ENCODE measurements at regions of chr1 and their contacts with region 1.

Region 1: GRCh38 chr1:214328770-214329469 is 48.0 kb downstream of the SMYD2 start:
- DNase-seq: no peak
- H3K4me3 ChIP-seq: no peak overlapping the region
- CTCF ChIP-seq: peak; percentile 92

Region 2: DNA sequence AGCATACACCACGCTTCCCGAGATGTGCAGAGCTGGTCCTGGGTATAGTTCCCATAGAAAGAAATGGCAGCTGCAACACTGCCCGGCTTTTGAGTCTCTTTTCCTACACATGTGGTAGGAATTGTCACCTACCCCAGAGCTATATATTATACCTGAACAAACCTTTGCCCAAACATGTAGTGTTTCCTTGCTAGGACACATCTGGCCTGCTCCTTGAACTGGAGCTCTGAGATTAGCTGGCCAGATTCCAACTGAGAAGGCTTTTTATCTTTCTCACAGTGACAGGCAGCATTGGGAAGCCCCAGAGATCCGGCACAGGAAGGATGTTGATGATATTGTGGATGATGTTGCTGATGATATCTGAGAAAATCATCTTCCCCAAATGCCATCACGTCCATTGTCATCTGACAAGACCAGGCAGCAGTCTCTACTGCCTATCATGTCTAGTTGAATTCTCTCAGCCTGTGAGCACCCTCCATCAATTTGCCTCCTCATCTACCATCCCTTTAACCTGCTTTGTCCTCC is 163.0 kb before region 1 on chr1:
- CTCF ChIA-PET with region 1: no interaction called
- POLR2A ChIA-PET with region 1: no interaction called
- DNase-seq: no peak
- H3K4me3 ChIP-seq: no peak overlapping the region
- CTCF ChIP-seq: no peak

Region 3: DNA sequence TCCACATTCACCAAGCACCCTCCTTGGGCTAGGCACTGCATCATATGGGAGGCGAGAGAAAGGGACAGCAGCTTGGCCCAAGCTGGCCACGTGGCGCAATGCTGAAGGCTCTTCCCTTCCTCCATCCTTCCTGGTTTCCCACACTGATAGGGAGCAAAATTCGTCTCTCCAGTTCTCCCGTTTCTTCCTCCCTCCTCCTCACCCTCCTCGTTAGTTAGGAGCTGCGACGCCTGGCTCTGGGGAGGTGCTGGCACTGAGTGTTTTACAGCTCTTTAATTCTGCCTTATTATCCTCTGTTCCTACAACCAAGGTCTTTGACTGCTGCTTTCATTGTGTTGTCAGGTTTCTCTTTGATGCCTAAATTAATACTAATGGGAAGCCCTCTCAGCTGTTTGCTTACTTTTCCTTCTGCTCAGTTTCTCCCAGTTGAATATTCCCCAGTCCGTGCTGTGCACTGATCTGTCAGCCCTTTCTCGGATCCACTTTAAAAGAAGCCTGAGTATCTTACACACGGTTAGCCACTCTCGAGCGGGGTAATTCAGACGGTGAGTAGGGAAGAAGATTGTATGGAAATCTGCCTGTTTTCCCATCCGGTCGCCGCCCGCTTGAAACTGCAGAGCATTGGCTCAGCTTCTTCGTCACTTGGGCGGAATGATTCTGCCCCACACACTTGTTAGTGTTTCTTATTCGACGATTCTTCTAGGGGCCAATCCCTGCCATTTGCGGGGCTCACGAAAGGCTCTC is 104.1 kb before region 1 on chr1:
- CTCF ChIA-PET with region 1: interaction called, 584 read pairs
- POLR2A ChIA-PET with region 1: no interaction called
- DNase-seq: no peak
- H3K4me3 ChIP-seq: peak overlapping the region; percentile 48
- CTCF ChIP-seq: no peak

Region 4: DNA sequence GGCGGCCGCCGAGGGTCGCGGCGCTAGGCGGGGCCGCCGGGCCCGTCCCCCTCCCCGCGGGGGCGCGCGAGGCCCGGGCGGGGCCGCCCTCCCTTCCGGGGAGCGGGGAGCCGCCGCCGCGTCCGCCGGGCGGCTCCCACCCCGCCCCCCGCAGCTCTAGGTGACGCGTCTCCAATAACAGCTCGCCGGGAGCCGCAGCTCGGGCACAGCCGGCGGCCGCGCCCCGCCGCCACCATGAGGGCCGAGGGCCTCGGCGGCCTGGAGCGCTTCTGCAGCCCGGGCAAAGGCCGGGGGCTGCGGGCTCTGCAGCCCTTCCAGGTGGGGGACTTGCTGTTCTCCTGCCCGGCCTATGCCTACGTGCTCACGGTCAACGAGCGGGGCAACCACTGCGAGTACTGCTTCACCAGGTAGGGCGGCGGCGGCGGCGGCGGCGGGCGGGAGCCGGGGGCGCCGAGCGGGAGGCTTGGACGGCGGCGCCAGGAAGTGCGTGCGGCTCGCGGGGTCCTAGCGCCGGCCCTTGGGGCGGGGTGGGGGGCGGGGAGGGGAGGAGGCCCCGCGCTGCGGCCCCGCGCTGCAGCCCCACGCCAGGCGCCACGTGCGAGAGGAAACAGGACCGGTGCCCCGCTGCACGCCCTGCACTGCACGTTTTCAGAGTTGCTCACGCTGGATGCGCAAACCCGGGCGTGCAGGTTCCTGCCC is 47.8 kb before region 1 on chr1 and contains the start of gene SMYD2:
- CTCF ChIA-PET with region 1: interaction called, 16 read pairs
- POLR2A ChIA-PET with region 1: no interaction called
- DNase-seq: no peak
- H3K4me3 ChIP-seq: peak within 1 kb of the TSS; percentile 92
- CTCF ChIP-seq: no peak

Region 5: DNA sequence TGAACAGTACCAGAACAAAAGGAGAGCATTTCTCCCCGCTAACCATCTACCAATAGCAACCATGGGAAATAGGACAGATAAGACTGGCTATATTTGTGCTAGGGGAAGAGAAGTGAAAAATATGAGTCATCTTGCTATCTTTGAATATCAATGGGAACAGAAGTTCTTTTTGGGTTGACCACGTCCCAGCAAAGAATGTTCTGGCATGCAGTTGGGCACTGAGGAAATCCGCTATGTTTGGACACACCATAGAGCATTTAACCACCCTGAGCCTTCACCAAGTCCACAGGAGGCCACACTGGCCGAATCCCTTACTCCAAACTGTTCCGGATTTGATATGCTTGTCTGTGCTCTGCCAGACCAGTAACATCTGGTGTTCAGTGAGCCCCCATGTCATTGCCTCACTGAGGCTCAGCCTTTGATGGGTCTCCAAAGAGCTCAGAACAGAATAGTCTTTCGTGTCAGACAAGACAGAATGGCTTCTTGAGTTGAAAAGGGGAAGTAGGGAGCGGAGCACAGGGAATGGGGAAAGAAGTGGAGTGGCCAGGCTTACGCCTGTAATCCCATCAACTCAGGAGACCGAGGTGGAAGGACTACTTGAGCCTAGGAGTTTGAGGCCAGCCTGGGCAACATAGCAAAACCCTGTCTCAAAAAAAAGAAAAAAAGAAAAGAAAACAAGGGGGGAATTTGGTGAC is 33.4 kb after region 1 on chr1:
- CTCF ChIA-PET with region 1: interaction called, 22 read pairs
- POLR2A ChIA-PET with region 1: no interaction called
- DNase-seq: no peak
- H3K4me3 ChIP-seq: no peak overlapping the region
- CTCF ChIP-seq: no peak

Region 6: DNA sequence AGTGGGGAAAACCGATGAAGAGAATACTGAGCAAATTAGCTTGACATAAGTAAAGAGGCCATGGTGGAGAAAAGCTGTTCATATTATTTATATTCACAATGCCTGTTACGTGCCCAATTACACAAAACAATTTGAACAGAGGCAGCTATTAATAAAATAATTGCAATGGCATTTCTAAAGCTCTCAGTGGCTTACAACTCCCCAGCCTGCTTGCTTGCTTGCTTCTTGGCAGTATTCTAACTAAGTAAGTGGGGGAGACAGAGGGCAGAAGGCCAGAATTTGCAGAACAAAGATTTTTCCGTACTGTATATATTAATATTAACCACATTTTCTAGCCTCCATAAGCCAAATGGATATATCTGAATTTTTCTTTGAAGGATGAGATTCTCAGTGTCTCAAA is 209.6 kb after region 1 on chr1:
- CTCF ChIA-PET with region 1: interaction called, 17 read pairs
- POLR2A ChIA-PET with region 1: no interaction called
- DNase-seq: no peak
- H3K4me3 ChIP-seq: no peak overlapping the region
- CTCF ChIP-seq: no peak

Region 7: DNA sequence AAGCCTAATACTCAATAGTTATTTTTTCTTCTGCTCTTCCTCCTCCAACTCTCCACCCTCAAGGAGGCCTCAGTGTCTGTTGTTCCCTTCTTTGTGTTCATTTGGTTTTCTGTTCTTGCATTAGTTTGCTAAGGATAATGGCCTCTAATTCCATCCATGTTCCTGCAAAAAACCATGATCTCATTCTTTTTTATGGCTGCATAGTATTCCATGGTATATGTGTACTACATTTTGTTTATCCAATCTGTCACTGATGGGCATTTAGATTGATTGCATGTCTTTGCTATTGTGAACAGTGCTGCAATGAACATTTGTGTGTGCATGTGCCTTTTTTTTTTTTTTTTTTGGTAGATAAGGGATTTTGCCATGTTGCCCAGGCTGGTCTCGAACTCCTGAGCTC is 280.8 kb after region 1 on chr1:
- CTCF ChIA-PET with region 1: interaction called, 35 read pairs
- POLR2A ChIA-PET with region 1: no interaction called
- DNase-seq: no peak
- H3K4me3 ChIP-seq: no peak overlapping the region
- CTCF ChIP-seq: no peak

Measured in AG04449 (cell line).